ENCODE measurements at regions of chr6 and their contacts with region 1.

Region 1: DNA sequence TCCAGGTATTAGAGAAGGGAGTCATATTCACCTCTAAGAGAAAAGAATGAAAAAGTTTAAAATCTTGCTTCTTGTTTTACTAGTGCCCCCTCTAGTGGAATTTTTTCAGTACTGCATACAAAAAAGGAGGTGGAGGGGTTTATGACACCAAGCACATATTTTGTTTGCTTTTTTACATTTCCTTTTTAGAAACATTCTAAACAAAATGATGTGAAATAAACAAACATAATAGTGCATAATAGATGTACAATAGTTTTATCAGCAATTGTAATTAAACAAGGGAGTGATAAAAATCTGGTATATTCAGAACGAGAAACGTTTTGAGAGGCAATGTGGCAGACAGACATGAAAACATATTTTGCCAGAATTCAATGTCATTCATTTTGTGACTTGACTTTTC is 111.0 kb upstream of the TFAP2D start:
- DNase-seq: peak; percentile 62
- H3K4me3 ChIP-seq: no peak overlapping the region
- H3K27ac ChIP-seq: no peak overlapping the region
- H3K4me1 ChIP-seq: no peaks in the 10 kb centered on the region
- H3K27me3 ChIP-seq: peaks cover 30% of the 10 kb centered on the region
- CTCF ChIP-seq: peak; percentile 81

Region 2: GRCh38 chr6:50128420-50129005 is 473.8 kb before region 1 on chr6:
- CTCF ChIA-PET with region 1: interaction called, 3 read pairs
- POLR2A ChIA-PET with region 1: no interaction called
- intact Hi-C with region 1: loop called (anchors 1 kb)
- DNase-seq: peak; percentile 19
- H3K4me3 ChIP-seq: no peak overlapping the region
- H3K27ac ChIP-seq: no peak overlapping the region
- H3K4me1 ChIP-seq: no peaks in the 10 kb centered on the region
- H3K27me3 ChIP-seq: peaks cover 25% of the 10 kb centered on the region
- CTCF ChIP-seq: peak; percentile 65

Region 3: DNA sequence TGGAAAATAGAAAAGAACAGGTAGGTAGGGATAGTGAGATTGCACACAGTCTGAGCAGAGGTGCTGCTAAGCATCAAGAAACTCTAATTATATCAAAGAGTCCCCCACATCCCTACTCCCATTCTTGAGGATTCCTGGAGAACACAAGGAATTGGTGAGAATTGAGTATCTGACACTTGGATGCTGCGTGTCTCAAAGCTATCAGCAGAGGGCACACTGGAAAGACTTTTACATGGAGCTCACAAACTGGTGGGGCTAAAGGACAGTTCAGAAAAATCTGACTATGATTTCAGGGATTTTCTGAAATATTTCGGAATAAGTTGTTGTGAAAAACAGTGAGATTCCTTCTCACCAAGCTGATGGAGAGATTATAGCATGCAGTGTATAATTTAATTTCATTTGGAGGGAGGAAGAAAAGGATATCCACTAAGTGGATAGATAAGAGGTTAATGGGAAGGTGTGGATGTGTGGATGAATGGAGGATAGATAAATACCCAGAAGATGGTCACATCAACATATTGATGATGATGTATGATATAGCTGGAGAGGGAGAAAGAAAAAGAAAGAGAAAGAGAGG is 337.2 kb before region 1 on chr6:
- CTCF ChIA-PET with region 1: interaction called, 4 read pairs
- POLR2A ChIA-PET with region 1: no interaction called
- intact Hi-C with region 1: loop called (anchors 2 kb)
- DNase-seq: peak; percentile 30
- H3K4me3 ChIP-seq: no peak overlapping the region
- H3K27ac ChIP-seq: no peak overlapping the region
- H3K4me1 ChIP-seq: no peaks in the 10 kb centered on the region
- H3K27me3 ChIP-seq: peaks cover 8% of the 10 kb centered on the region
- CTCF ChIP-seq: peak; percentile 55

Region 4: GRCh38 chr6:50778696-50779095 is 176.4 kb after region 1 on chr6:
- CTCF ChIA-PET with region 1: no interaction called
- POLR2A ChIA-PET with region 1: no interaction called
- intact Hi-C with region 1: no loop called
- DNase-seq: no peak
- H3K4me3 ChIP-seq: no peak overlapping the region
- H3K27ac ChIP-seq: no peak overlapping the region
- H3K4me1 ChIP-seq: no peaks in the 10 kb centered on the region
- H3K27me3 ChIP-seq: peaks cover 33% of the 10 kb centered on the region
- CTCF ChIP-seq: no peak

Measured in A673 (cell line).